B cell (primary cell): ENCODE measurements at regions of chr11 and their contacts with region 1.

Region 1: DNA sequence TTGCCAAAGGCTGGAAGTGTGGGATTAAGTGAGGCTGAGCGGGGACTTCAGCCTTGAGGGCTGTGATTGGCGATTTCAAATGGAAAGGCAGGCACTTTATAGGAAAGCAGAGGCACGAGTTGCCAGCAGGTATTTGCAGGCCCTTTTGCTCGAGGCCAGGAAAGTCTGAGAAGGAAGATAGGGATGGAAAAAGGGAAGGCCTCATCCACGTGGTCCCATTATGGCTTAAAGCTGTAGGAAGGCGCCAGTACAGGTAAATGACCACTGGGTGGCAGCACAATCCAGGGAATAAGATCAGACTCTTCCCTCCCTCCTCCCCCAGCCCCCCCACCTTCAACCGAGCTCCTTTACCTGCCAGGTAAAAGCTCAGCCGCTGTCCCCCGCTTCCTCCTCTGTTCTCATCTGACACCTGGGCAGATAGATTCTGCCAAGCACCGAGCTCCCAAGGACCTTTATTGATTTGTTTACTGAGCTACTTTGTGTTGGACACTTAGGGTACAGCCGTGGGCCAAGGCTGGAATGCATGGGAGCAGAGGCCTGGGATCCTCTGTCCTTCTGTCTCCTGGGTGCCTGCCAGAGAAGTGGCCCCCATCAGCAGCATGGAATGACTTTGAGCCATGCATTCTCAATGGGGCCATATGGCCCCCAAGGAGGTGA is 7.5 kb downstream of the P2RX3 start:
- DNase-seq: peak; percentile 78
- ATAC-seq: peak; percentile 82
- H3K4me3 ChIP-seq: no peak overlapping the region
- H3K4me3 Mint-ChIP-seq: no peak overlapping the region
- H3K27ac ChIP-seq: no peak overlapping the region
- H3K27ac Mint-ChIP-seq: no peak overlapping the region
- H3K4me1 ChIP-seq: peaks cover 0 to 6% of the 10 kb centered on the region in 2 donors
- H3K4me1 Mint-ChIP-seq: peaks cover 6% of the 10 kb centered on the region
- H3K27me3 ChIP-seq: no peaks in the 10 kb centered on the region
- H3K27me3 Mint-ChIP-seq: peaks cover 8% of the 10 kb centered on the region
- CTCF ChIP-seq: peak; percentile 82

Region 2: DNA sequence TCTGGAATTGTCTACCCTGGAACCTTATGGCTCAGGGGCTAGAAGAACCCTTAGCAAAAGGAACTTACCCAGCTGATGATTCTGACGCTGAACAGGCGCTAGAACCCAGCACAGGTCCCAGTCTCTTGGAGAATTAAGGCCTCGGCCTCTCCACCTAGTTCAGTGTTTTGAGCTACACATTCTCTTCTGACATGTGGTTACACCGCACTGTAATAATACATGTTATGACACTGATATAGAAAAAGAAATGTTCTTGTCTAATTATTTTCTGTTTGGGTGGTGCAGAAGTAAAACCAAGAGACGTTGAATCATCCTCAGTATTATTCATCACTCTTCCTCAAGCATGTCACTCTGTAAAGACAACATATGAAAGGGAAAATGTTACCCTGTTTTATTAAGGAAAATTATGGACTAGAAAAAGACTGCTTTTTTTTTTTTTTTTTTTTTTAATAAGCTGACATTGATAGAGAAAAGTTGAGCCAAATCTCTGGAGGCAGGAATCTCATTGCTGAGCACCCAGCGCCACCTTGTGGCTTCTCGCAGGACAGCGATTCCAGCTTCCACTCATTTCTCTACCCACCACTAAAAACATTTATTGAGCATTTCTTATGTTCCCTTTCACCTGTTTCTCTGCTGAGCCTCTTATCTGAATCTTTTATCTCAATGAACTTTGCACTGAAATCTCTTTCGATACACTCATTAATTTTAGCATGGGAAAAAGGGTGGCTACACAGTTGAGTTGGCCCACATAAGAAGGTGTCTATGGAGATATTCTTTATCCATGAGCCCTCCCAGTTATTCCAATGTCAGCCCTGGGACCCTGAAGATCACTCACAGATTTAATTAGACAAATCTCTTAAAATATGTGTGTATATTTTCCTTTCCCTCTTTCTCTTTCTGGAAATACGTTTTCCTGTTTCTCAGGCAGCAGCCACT is 96.0 kb before region 1 on chr11:
- CTCF ChIA-PET with region 1: no interaction called
- POLR2A ChIA-PET with region 1: no interaction called
- intact Hi-C with region 1: no loop called
- DNase-seq: peak; percentile 30
- ATAC-seq: peak; percentile 31
- H3K4me3 ChIP-seq: no peak overlapping the region
- H3K4me3 Mint-ChIP-seq: no peak overlapping the region
- H3K27ac ChIP-seq: no peak overlapping the region
- H3K27ac Mint-ChIP-seq: no peak overlapping the region
- H3K4me1 ChIP-seq: peaks cover 0 to 4% of the 10 kb centered on the region in 2 donors
- H3K4me1 Mint-ChIP-seq: peaks cover 4% of the 10 kb centered on the region
- H3K27me3 ChIP-seq: peaks cover 0 to 25% (median 3%) of the 10 kb centered on the region in 4 experiments
- H3K27me3 Mint-ChIP-seq: peaks cover 31% of the 10 kb centered on the region
- CTCF ChIP-seq: peak; percentile 71

Region 3: DNA sequence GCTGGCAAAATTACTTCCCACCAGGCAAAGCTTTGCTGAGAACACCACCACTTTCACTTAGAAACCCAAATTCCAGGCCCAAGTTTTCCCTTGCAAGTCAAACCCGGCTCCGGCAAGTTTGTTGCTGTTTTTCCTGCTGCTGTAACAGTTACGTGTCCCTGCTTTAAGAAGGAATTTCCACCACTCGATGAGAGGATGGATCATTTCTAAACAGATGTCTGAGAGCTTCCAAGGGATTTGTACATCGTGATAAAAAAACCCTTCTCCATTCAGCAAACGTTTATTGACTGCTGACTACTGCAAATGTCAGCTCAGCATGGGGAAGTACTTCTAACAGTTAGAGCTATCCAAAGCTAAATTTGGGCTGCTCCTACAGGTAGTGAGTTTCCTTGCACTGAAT is 12.2 kb after region 1 on chr11:
- CTCF ChIA-PET with region 1: interaction called, 15 read pairs
- POLR2A ChIA-PET with region 1: interaction called, 3 read pairs
- intact Hi-C with region 1: no loop called
- DNase-seq: no peak
- ATAC-seq: no peak
- H3K4me3 ChIP-seq: no peak overlapping the region
- H3K4me3 Mint-ChIP-seq: no peak overlapping the region
- H3K27ac ChIP-seq: no peak overlapping the region
- H3K27ac Mint-ChIP-seq: no peak overlapping the region
- H3K4me1 ChIP-seq: no peaks in the 10 kb centered on the region
- H3K4me1 Mint-ChIP-seq: no peaks in the 10 kb centered on the region
- H3K27me3 ChIP-seq: peaks cover 0 to 5% (median 1%) of the 10 kb centered on the region in 4 experiments
- H3K27me3 Mint-ChIP-seq: peaks cover 38% of the 10 kb centered on the region
- CTCF ChIP-seq: no peak

Region 4: DNA sequence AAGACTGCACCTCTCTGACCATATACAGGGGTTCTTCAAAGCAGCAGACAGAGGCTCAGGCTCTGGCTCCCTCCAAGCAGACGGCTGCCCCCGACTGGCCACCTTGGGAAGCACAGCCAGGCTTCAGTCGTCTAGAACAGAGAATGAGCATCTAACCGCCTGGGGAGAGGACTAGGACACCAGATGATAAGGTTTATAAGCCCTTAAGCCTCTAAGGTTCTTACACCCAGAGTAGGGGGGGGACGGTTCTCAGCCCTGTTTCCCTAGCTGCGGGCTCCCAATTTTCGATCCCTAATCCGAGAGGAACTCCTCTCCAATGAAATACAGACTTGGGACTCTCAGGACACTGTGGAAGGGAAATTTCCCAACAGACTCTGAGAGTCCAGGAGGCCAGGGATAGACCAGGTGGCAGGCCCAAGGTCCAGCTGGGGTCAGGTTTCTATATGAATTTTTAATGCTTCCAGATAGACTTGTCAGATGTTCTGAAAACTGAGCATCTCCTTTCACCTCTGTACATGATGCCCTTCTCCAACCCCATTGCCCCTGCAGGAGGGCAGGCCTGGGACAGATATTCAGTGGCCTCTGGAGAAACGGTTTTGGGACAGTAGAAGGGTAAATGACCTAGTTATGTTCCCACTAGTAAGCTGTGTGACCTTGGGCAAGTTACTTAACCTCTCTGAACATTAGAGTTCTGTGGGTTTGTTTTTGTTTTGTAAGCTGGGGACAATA is 134.9 kb after region 1 on chr11:
- CTCF ChIA-PET with region 1: interaction called, 4 read pairs
- POLR2A ChIA-PET with region 1: no interaction called
- intact Hi-C with region 1: loop called (anchors 1 kb)
- DNase-seq: peak; percentile 52
- ATAC-seq: peak; percentile 22
- H3K4me3 ChIP-seq: no peak overlapping the region
- H3K4me3 Mint-ChIP-seq: peak overlapping the region; percentile 61
- H3K27ac ChIP-seq: no peak overlapping the region
- H3K27ac Mint-ChIP-seq: no peak overlapping the region
- H3K4me1 ChIP-seq: peaks cover 46 to 53% of the 10 kb centered on the region in 2 donors
- H3K4me1 Mint-ChIP-seq: peaks cover 60% of the 10 kb centered on the region
- H3K27me3 ChIP-seq: peaks cover 0 to 22% (median 9%) of the 10 kb centered on the region in 4 experiments
- H3K27me3 Mint-ChIP-seq: peaks cover 5% of the 10 kb centered on the region
- CTCF ChIP-seq: peak; percentile 63

Region 5: DNA sequence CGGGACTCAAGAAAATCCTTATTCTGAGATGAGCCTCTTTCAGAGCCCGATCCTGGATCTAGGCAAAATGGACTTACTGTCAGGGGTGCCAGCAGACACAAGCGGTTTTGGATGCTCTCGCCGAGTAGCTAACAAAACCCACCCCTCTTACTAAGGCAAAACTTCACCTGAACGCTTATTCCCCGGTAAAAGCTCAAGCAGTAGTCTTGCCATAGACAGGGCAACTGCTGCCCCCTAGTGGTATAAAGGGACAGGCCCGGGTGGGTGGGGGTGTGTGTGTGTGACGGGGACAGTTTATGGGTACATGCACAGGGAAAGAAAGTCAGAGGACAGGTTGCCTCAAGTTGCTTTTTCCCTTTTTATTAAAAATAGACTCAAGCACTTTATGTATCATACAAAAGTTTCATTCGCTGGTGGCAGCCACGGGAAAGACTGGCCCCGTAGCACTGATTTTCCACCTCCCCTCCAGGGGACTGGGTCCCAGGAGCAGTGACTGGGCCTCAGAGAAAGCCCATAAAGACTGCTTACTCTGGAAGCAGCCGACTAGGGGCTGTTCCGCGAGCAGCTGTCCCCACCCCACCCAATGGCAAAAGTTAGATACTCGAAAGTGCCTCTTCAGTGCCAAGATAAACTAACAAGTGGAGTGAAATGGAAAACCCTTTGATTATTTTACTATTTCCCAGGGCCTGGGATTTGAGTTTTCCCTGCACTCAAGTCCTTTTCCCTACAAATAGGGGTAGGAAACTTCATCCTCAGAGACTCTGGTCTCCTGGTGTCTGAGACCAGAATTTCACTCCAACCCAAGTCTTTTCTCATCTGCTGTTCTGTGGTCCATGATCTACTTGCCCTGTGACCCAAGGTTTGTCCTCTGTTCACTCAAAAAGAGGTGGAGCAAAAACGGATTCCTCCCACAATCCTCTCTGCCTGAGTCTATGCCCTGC is 299.3 kb after region 1 on chr11:
- CTCF ChIA-PET with region 1: interaction called, 94 read pairs
- POLR2A ChIA-PET with region 1: interaction called, 3 read pairs
- intact Hi-C with region 1: loop called (anchors 1 kb)
- DNase-seq: peak; percentile 85
- ATAC-seq: peak; percentile 71
- H3K4me3 ChIP-seq: no peak overlapping the region
- H3K4me3 Mint-ChIP-seq: no peak overlapping the region
- H3K27ac ChIP-seq: no peak overlapping the region
- H3K27ac Mint-ChIP-seq: no peak overlapping the region
- H3K4me1 ChIP-seq: peaks cover 43 to 46% of the 10 kb centered on the region in 2 donors
- H3K4me1 Mint-ChIP-seq: peaks cover 40% of the 10 kb centered on the region
- H3K27me3 ChIP-seq: peaks cover 0 to 58% (median 47%) of the 10 kb centered on the region in 4 experiments
- H3K27me3 Mint-ChIP-seq: peaks cover 70% of the 10 kb centered on the region
- CTCF ChIP-seq: peak; percentile 81